ENCODE measurements at regions of chrX and their contacts with region 1.

Region 1: DNA sequence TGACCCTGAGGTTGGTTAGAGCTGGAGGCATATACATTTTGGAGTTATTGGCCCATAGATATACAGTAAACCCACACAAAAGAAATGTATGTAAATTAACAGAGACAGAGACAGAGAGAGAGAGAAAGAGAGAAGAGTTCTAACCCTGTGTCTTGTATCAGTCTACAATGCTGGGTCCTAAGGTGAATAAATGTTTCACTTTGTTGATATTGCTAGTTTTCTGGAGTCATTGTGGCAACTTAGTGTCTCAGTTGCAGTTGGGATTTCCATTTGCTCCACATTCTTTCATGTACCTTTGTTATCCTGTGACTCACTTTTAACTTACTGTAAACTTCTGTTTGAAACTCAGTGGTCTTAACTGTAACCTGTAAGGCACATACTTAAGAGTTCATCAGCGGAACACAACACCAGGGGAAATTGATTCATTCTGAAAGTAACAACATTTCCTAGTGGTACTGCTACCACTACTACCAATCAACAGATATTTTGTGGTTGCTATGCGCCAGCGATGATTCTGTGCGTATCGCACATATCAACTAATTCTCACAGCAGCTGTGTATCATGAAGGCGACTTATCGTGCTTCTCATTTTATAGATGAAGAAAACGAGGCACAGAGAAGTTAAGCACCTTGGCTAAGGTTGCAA is 38.5 kb upstream of the ETDA start:
- DNase-seq: no peak
- CTCF ChIP-seq: no peak

Region 2: DNA sequence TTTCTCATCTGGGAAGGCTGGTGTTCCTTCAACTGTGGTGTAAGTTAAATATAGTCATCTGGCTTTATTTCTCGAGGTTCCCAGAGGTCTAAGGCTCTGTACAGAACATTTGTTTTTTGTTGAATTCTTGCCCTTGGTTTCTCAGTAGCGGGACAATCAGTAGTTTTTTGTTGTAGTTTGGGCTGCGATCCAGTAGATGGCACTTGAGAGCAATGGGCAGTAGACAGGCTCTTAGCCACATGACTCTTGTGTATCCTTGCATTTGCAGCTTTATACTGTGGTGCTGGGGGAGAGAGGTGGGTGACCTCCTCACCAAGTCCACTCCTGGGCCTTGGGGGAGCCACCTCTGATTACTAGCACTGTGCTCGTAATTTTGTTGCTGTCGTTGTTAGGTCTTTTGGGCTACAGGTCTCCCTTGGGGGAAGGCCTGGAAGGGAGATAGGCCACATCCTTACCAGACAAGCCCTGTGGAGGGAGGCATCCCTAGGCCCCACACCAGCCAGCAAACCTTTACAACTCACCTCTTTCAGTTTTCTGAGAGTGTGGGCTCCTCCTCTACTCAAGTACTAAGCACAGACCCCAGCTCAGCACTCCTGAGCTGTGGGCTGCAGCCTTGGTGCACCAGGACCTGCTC is 101.1 kb before region 1 on chrX:
- in situ Hi-C with region 1: loop called (anchors 25 kb)
- DNase-seq: no peak
- CTCF ChIP-seq: peak; percentile 69

Measured in GM13976 (cell line).